Kidney (tissue), 22 donors: ENCODE measurements at regions of chr9 and their contacts with region 1.

Region 1: GRCh38 chr9:14768405-14769229 is 46.1 kb upstream of the CER1 start:
- DNase-seq: peak in 4 of 5 donors; percentile 50 to 85 (median 72)
- H3K4me3 ChIP-seq: no peak overlapping the region
- H3K27ac ChIP-seq: no peak overlapping the region
- H3K4me1 ChIP-seq: no peaks in the 10 kb centered on the region
- H3K27me3 ChIP-seq: no peaks in the 10 kb centered on the region
- CTCF ChIP-seq: peak; percentile 59

Region 2: DNA sequence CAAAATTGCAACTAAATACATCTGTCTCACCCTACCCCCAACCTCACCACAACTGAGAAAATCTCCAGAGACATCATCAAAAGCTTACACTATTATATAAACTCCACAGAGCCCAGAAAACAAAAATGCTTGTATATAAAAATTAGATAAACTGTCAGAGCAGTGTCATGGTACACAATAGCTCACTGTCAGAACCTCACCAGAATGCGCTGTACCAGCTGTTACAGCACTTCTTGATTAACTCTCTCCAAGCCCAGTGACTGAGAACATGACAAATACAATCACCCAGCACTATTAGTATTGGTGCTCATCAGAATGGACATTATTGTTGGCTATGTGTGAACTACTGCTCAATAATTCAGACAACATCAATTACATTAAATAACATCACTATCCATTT is 141.1 kb before region 1 on chr9:
- intact Hi-C with region 1: loop called (anchors 10 kb)
- DNase-seq: no peak
- H3K4me3 ChIP-seq: peak overlapping the region in 1 of 3 donors; percentile 3
- H3K27ac ChIP-seq: no peak overlapping the region
- H3K4me1 ChIP-seq: no peaks in the 10 kb centered on the region
- H3K27me3 ChIP-seq: no peaks in the 10 kb centered on the region
- CTCF ChIP-seq: no peak